Activated CD4-positive, alpha-beta T cell treated with anti-CD3 and anti-CD28 coated beads, Interleukin-2, amount 10 ng/mL, durations not matched to agents 24 days and 14 days (primary cell): ENCODE measurements at regions of chr1 and their contacts with region 1.

Region 1: GRCh38 chr1:172895050-172895460 is 155.7 kb downstream of the TNFSF18 start:
- DNase-seq: peak; percentile 82
- H3K4me3 Mint-ChIP-seq: peak overlapping the region; percentile 72
- H3K27ac Mint-ChIP-seq: peak overlapping the region; percentile 14
- H3K4me1 Mint-ChIP-seq: peaks cover 38% of the 10 kb centered on the region
- H3K27me3 Mint-ChIP-seq: peaks cover 38% of the 10 kb centered on the region

Region 2: DNA sequence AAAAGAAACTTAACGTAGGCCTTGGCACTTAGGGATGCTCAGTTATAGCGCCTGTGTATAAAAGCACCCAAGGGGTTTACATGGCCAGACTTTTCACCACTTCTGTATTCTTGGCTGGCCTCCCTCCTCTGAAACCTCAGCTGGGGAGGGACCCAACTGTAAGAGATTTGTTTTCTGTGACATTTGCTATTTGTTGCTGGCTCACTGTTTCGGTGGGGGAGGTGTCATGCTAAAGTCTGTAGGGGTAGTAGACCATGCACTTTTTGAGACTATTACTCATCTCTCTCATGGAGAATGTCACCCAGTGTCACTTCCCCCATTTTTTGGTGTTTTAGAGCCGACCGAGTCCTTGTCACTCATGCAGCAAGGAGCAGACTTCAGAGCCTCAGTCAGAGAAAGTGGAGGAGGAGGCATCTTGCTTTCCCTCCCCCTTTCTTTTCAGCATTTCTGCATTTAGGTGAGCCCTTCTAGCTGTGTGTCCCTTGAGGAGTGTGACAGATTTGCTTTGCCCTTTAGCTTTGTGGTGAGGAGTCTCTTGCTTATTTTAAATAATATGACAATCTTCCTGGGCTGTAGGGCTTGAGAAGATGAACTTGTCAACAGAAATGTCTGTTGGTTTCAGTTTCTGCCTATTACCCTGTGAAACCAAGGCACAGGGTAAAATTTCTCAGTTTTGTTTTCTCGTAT is 76.1 kb before region 1 on chr1:
- intact Hi-C with region 1: loop called (anchors 1 kb)
- DNase-seq: peak; percentile 80
- H3K4me3 Mint-ChIP-seq: peak overlapping the region; percentile 77
- H3K27ac Mint-ChIP-seq: peak overlapping the region; percentile 82
- H3K4me1 Mint-ChIP-seq: peaks cover 41% of the 10 kb centered on the region
- H3K27me3 Mint-ChIP-seq: peaks cover 14% of the 10 kb centered on the region

Region 3: GRCh38 chr1:172870901-172871606 is 24.0 kb before region 1 on chr1:
- intact Hi-C with region 1: loop called (anchors 1 kb)
- DNase-seq: peak; percentile 67
- H3K4me3 Mint-ChIP-seq: no peak overlapping the region
- H3K27ac Mint-ChIP-seq: no peak overlapping the region
- H3K4me1 Mint-ChIP-seq: peaks cover 33% of the 10 kb centered on the region
- H3K27me3 Mint-ChIP-seq: peaks cover 39% of the 10 kb centered on the region

Region 4: GRCh38 chr1:172934417-172934762 is 39.3 kb after region 1 on chr1:
- intact Hi-C with region 1: loop called (anchors 1 kb)
- DNase-seq: no peak
- H3K4me3 Mint-ChIP-seq: no peak overlapping the region
- H3K27ac Mint-ChIP-seq: no peak overlapping the region
- H3K4me1 Mint-ChIP-seq: peaks cover 13% of the 10 kb centered on the region
- H3K27me3 Mint-ChIP-seq: peaks cover 6% of the 10 kb centered on the region

Region 5: DNA sequence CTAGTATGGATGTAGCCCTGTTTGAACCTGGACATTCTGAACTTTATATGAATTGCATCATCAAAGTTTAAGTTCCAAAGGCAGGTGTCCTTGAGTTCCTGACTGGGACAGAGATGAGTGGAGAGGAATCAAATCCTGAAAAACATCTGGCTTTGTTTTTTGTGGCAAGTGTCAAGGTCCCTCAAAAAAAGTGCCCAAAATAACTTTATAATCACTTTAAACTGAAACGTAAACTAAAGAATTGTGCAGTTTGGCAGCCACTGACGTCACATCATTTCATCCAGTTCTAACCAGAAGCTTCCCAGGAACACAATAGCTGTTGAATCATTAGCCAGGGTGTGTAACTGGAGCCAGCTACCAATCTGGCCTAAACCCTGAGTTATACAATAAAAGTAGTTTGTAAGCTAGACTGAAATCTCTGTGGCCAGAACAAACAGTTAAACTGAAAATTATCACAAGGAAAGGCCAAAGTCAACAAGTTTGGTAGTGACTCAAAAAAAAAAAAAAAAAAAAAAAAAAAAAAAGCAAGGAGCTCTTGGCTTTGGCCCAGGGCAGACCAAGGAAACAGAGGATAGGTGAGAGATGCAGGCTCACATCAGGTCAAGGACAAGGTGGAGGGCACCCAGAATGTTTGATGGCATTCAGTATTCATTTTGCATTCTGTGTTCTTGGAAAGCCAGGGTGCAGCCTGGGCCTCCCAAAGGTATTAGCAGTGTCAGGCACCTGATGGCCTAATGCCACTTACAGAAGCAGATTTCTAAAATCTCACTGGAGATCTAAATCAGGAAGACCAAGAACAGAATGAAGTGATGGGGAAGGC is 81.4 kb after region 1 on chr1:
- intact Hi-C with region 1: no loop called
- DNase-seq: no peak
- H3K4me3 Mint-ChIP-seq: no peak overlapping the region
- H3K27ac Mint-ChIP-seq: no peak overlapping the region
- H3K4me1 Mint-ChIP-seq: no peaks in the 10 kb centered on the region
- H3K27me3 Mint-ChIP-seq: peaks cover 14% of the 10 kb centered on the region

Region 6: GRCh38 chr1:173202430-173203145 is 307.5 kb after region 1 on chr1:
- intact Hi-C with region 1: loop called (anchors 2 kb)
- DNase-seq: peak; percentile 67
- H3K4me3 Mint-ChIP-seq: no peak overlapping the region
- H3K27ac Mint-ChIP-seq: no peak overlapping the region
- H3K4me1 Mint-ChIP-seq: peaks cover 32% of the 10 kb centered on the region
- H3K27me3 Mint-ChIP-seq: peaks cover 32% of the 10 kb centered on the region

Region 7: DNA sequence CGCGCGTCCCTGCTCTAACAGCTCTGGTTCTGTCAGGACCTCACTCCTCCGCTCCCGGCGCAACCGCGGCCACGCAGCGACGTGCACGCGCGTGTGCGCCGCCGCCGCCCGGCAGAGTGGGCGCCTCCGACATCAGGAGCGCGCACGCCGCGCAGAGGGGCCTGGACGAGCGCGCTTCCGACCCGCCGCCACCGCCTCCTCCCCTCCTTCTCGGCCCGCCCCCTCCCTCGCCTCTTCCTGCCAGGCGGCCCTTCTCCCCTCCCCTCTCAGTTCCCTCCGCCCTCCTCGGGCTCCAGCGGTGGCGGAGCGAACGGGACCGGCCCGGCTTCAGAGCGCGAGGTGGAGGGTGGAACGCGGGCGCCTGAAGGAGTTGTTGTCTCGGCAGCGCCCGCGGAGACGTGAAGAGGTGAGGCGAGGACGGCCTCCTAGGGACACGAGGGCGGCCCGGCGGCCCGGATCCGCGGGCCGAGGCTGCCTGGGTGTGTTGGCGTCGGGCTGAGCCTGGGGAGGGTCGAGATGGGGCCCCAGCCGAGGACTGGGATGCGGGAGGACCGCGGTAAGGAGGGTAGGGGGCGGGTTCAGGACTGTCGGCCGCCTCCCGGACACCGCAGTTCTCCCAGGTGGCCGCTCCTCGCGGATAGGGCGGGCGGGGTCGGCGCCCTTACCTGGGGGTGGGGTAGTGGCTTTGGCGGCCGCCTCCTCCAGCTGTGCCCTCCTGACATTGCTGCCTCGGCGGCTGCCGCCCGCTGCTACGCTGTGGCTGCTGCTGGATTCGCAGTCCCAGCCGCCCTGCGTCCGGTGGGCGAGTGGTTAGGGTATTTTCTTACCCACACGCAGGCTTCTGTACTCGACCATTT is 1264.4 kb after region 1 on chr1 and contains the start of gene RABGAP1L:
- intact Hi-C with region 1: loop called (anchors 10 kb)
- DNase-seq: peak; percentile 98
- H3K4me3 Mint-ChIP-seq: peak within 1 kb of the TSS; percentile 93
- H3K27ac Mint-ChIP-seq: peak within 1 kb of the TSS; percentile 98
- H3K4me1 Mint-ChIP-seq: peaks cover 52% of the 10 kb centered on the region
- H3K27me3 Mint-ChIP-seq: no peaks in the 10 kb centered on the region
- total RNA-seq, gene RABGAP1L: 36.9 and 37.2 TPM in 2 replicates